ENCODE measurements at regions of chr15 and their contacts with region 1.

Region 1: DNA sequence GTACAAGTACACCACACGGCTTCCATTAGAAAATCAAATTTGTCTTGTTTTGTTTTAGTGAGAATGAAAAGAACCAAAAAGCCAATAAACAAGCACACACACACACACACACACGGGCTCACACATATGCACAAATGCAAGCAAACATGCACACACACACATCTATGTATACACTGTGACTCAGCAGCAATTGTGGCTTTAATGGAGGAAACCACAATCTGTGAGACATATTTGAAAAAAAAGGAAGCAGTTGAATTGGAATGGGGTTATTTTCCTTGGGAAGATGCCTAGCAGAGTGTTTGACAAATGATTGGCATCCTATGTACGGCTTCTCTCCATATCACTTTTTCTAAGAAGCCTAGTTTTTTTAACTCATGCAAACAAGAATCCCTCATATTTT is 201.1 kb upstream of the ARRDC4 start:
- DNase-seq: no peak
- ATAC-seq: no peak

Region 2: GRCh38 chr15:97248376-97248775 is 511.0 kb before region 1 on chr15:
- intact Hi-C with region 1: loop called in 1 of 2 experiments (anchors 10 kb)
- DNase-seq: no peak
- ATAC-seq: no peak

Region 3: DNA sequence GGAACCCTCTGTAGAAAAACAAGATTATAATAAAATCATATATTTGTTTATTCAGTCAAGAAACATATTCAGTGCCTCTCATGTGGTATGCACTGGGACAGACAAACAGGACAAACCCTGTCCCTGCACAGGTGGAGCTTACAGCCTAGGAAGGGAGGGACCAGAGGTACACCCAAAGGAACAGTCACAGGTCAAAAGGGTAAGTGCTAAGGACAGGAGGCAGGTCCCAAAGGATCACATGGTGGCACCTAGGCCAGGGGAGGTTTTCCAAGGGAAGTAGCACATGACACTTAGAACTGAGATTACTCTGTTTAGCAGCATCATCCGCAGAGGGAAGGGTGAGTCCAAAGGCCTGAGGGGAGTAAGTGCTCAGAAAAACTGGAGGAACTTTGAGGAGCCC is 53.3 kb before region 1 on chr15:
- intact Hi-C with region 1: no loop called
- DNase-seq: no peak
- ATAC-seq: no peak

Region 4: GRCh38 chr15:97909291-97909891 is 150.0 kb after region 1 on chr15:
- intact Hi-C with region 1: no loop called
- DNase-seq: peak; percentile 50
- ATAC-seq: peak; percentile 78 to 90